ENCODE measurements at regions of chr1 and their contacts with region 1.

Region 1: DNA sequence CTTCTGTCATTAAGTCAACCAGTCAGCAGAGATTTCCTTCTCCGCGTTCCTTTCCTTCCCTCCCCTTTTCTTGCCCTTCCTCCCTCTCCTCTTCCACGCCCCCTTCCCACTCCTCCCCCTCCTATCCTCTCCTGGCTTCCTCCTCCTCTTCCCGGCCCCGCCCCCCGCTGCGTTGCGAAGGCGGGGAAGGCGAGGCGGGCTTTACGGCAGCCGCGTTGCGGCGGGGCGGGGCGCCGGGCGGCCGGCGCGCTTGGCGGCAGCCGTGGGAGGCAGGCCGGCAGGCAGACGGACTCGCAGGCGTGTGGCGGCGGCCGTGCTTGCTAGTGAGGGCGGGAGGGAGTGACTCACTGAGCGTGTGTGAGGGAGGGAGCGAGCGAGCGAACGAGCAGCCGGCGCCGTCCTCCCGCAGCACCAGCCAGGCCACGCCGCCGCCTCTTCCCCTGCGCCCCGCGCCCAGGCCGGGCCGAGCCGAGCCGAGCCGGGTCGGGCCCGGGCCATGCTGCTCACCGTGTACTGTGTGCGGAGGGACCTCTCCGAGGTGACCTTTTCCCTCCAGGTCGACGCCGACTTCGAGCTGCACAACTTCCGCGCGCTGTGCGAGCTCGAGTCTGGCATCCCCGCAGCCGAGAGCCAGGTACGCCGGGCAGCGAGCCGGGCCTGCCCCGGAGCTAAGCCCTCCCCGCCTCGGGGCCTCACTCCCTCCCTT is at the start of gene DDI2:
- DNase-seq: peak; percentile 86 to 97 (median 88)
- ATAC-seq: peak; percentile 94
- H3K4me3 ChIP-seq: peak within 1 kb of the TSS; percentile 96
- H3K4me3 Mint-ChIP-seq: peak within 1 kb of the TSS; percentile 83 to 96 (median 94)
- H3K27ac ChIP-seq: peak within 1 kb of the TSS; percentile 88
- H3K27ac Mint-ChIP-seq: peak within 1 kb of the TSS; percentile 84 to 96 (median 92)
- H3K4me1 ChIP-seq: peaks cover 20 to 30% of the 10 kb centered on the region in 2 donors
- H3K4me1 Mint-ChIP-seq: peaks cover 29 to 51% (median 43%) of the 10 kb centered on the region in 7 donors
- H3K27me3 ChIP-seq: no peaks in the 10 kb centered on the region
- H3K27me3 Mint-ChIP-seq: no peaks in the 10 kb centered on the region
- total RNA-seq, gene DDI2: 24.5 to 46.8 (median 37.0) TPM

Region 2: DNA sequence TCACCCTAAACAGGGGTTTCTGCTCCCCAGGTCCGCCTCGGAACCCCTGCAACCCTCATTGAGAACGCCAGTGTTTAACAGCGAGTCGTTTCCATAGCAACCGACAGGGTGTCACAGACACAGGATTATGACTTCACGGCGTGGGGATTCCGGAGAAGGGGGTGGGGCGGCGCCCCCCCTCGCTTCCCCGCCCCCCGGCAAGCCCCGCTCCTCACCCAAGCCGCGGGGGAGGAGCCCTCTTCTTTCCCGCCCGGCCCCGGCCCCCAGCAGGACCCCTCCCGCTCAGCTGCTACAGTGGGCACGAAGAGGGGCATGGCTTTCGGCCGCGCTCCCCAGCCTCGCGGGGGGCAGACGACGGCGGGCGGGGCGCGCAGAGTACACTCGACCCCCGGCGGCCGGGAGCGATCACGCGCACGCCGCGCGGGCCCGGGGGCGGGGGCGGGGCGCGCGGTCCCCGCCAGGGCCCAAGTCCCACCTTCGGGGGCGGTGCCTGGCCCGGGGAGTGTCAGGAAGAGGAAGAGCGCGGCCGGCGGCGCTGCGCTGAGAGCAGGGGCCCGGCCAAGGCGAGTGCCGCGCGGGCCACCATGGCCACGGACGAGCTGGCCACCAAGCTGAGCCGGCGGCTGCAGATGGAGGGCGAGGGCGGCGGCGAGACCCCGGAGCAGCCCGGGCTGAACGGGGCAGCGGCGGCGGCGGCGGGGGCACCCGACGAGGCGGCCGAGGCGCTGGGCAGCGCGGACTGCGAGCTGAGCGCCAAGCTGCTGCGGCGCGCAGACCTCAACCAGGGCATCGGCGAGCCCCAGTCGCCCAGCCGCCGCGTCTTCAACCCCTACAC is 207.7 kb before region 1 on chr1 and contains the start of gene EFHD2:
- CTCF ChIA-PET with region 1: no interaction called
- POLR2A ChIA-PET with region 1: no interaction called
- intact Hi-C with region 1: loop called in 1 of 2 experiments (anchors 1 kb)
- DNase-seq: peak; percentile 71 to 97 (median 82)
- ATAC-seq: peak; percentile 82
- H3K4me3 ChIP-seq: peak within 1 kb of the TSS; percentile 77
- H3K4me3 Mint-ChIP-seq: peak within 1 kb of the TSS; percentile 87 to 99 (median 92)
- H3K27ac ChIP-seq: peak within 1 kb of the TSS; percentile 94
- H3K27ac Mint-ChIP-seq: peak within 1 kb of the TSS; percentile 66 to 97 (median 95)
- H3K4me1 ChIP-seq: peaks cover 20 to 69% of the 10 kb centered on the region in 2 donors
- H3K4me1 Mint-ChIP-seq: peaks cover 6 to 52% (median 33%) of the 10 kb centered on the region in 7 donors
- H3K27me3 ChIP-seq: no peaks in the 10 kb centered on the region
- H3K27me3 Mint-ChIP-seq: peaks cover 0 to 33% (median 0%) of the 10 kb centered on the region in 5 donors
- total RNA-seq, gene EFHD2: 29.9 to 258 (median 82.6) TPM

Region 3: DNA sequence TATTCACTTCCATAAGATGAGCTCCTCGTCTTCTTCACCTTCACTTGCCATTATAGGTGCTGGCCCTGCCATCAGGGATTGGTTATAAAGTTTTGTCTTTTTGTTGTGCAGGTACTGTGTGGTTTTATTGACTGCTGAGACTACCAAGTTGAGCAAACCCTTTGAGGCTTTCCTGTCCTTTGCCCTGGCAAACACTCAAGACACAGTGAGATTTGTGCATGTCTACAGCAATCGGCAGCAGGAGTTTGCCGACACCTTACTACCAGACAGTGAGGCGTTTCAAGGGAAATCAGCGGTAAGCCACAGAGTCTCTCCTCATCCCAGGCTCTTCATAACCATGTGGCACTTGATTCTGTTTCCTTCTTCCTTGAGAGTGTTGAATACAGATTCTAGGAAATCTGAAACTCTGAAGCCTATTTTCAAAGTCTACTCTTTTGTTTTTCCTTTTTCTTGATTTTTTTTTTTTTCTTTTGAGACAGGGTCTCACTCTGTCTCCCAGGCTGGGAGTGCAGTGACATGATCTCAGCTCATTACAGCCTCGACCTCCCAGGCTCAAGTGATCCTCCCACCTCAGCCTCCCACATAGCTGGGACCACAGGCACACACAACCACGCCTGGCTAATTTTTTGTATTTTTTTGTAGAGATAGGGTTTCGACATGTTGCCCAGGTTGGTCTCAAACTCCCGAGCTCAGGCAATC is 55.1 kb before region 1 on chr1:
- CTCF ChIA-PET with region 1: no interaction called
- POLR2A ChIA-PET with region 1: no interaction called
- intact Hi-C with region 1: no loop called
- DNase-seq: no peak
- ATAC-seq: no peak
- H3K4me3 ChIP-seq: no peak overlapping the region
- H3K4me3 Mint-ChIP-seq: no peak overlapping the region
- H3K27ac ChIP-seq: no peak overlapping the region
- H3K27ac Mint-ChIP-seq: peak overlapping the region in 2 of 9 donors; percentile 8 to 25
- H3K4me1 ChIP-seq: no peaks in the 10 kb centered on the region
- H3K4me1 Mint-ChIP-seq: peaks cover 0 to 6% (median 4%) of the 10 kb centered on the region in 7 donors
- H3K27me3 ChIP-seq: no peaks in the 10 kb centered on the region
- H3K27me3 Mint-ChIP-seq: no peaks in the 10 kb centered on the region

Region 4: DNA sequence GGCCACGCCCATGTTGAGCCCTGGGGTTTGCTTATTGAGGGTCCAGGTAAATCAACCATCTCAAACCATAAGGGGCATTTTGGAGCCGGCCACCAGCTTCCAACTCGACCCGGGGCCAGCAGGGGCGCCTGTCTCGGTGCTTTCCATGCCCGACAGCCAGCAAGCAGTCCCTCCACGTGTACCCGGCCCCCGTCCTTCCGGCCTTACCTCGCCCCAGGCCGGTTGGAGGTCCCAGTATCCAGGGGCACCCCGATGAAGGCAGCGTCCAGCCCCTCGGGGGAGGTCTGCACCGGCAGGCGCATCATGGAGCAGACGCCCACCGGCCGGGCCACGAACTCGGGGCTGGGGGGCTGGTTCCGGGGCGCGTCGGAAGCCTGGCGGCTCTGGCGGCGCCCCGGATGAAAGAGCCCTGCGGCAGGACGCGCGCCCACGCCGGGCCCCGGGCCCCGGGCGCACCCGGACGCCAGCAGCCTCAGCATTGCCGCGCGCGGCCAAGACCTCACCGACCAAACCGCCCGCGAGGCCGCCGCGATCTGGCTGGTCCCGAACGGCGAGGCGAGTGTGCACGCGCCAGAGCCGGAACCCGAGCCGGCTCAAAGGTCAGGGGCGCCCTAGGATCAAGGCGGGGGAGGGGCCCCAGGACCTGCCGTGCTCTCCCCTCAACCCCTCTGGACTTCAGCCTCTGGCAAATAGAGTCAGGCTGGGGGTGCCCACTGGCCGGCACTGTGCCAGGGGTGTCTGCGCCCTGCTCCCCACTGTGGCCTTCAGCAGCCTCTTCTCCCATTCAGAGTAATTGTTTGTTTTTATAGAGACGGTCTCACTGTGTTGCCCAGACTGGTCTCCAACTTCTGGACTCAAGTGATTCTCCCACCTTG is 32.6 kb before region 1 on chr1 and contains the start of gene AGMAT:
- CTCF ChIA-PET with region 1: no interaction called
- POLR2A ChIA-PET with region 1: interaction called, 35 read pairs
- intact Hi-C with region 1: loop called (anchors 1 kb)
- DNase-seq: peak; percentile 37 to 76 (median 54)
- ATAC-seq: peak; percentile 82
- H3K4me3 ChIP-seq: peak within 1 kb of the TSS; percentile 69
- H3K4me3 Mint-ChIP-seq: peak within 1 kb of the TSS; percentile 81 to 94 (median 88)
- H3K27ac ChIP-seq: peak within 1 kb of the TSS; percentile 88
- H3K27ac Mint-ChIP-seq: peak within 1 kb of the TSS; percentile 76 to 98 (median 94)
- H3K4me1 ChIP-seq: peaks cover 13 to 29% of the 10 kb centered on the region in 2 donors
- H3K4me1 Mint-ChIP-seq: peaks cover 12 to 48% (median 33%) of the 10 kb centered on the region in 7 donors
- H3K27me3 ChIP-seq: no peaks in the 10 kb centered on the region
- H3K27me3 Mint-ChIP-seq: no peaks in the 10 kb centered on the region
- total RNA-seq, gene AGMAT: 6.4 to 21.5 (median 9.5) TPM

Region 5: GRCh38 chr1:15684468-15685291 is 67.4 kb after region 1 on chr1:
- CTCF ChIA-PET with region 1: no interaction called
- POLR2A ChIA-PET with region 1: interaction called, 6 read pairs
- intact Hi-C with region 1: loop called in 1 of 2 experiments (anchors 1 kb)
- DNase-seq: peak; percentile 15 to 54 (median 33)
- ATAC-seq: peak; percentile 54
- H3K4me3 ChIP-seq: peak overlapping the region; percentile 68
- H3K4me3 Mint-ChIP-seq: peak overlapping the region; percentile 90 to 96 (median 94)
- H3K27ac ChIP-seq: peak overlapping the region; percentile 77
- H3K27ac Mint-ChIP-seq: peak overlapping the region; percentile 45 to 98 (median 95)
- H3K4me1 ChIP-seq: peaks cover 17% of the 10 kb centered on the region in 2 donors
- H3K4me1 Mint-ChIP-seq: peaks cover 25 to 42% (median 30%) of the 10 kb centered on the region in 7 donors
- H3K27me3 ChIP-seq: no peaks in the 10 kb centered on the region
- H3K27me3 Mint-ChIP-seq: no peaks in the 10 kb centered on the region

Region 6: GRCh38 chr1:15966081-15966955 is 349.0 kb after region 1 on chr1:
- CTCF ChIA-PET with region 1: no interaction called
- POLR2A ChIA-PET with region 1: no interaction called
- intact Hi-C with region 1: loop called in 1 of 2 experiments (anchors 5 kb)
- DNase-seq: peak in 4 of 9 donors; percentile 23 to 80 (median 27)
- ATAC-seq: peak; percentile 83
- H3K4me3 ChIP-seq: peak overlapping the region; percentile 19
- H3K4me3 Mint-ChIP-seq: peak overlapping the region; percentile 64 to 81 (median 76)
- H3K27ac ChIP-seq: peak overlapping the region; percentile 29
- H3K27ac Mint-ChIP-seq: peak overlapping the region; percentile 46 to 93 (median 74)
- H3K4me1 ChIP-seq: peaks cover 13 to 19% of the 10 kb centered on the region in 2 donors
- H3K4me1 Mint-ChIP-seq: peaks cover 40 to 72% (median 66%) of the 10 kb centered on the region in 7 donors
- H3K27me3 ChIP-seq: no peaks in the 10 kb centered on the region
- H3K27me3 Mint-ChIP-seq: no peaks in the 10 kb centered on the region